Right ventricle myocardium superior (tissue), 1 donor: ENCODE measurements at regions of chr16 and their contacts with region 1.

Region 1: DNA sequence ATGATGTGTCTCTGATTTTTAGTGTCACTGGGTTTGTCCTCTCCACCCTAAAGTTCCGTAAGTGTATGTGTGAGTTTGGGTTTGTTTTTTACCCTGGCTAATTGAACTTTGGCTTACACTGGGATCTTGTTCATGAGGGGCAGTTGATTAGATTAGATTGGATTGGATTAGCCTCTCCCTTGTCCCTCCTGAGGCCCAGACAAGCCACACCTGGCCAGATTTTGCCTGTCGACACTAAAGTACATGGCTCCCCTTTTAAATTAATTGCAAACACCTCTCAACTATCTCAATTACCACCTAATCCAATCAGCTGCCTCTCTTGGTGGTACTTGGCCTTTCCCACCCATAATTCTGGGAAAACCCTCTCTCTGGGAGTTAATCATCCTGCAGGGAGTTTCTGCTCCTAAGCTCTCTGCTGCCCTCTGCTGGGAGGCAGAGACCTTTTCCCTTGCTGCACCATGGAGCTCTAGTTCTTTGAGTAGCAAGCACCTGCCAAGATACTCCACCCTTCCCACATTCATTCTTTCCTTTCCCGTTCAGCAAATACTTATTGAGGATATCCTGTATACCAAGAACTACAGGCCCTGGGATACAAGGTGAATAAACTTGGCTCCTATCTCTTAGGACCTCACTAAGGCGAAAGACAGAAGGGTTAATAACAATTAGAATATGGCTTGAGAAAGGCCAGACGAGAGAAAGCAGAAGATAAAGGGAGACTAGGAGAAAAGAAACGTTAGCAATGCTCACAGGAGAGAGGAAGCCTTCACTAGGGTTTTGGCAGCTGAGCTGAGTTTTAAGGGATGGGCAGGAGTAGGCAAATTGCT is 60.0 kb upstream of the MPHOSPH6 start:
- DNase-seq: peak; percentile 66
- ATAC-seq: peak; percentile 79

Region 2: GRCh38 chr16:81891736-81892357 is 338.2 kb before region 1 on chr16:
- intact Hi-C with region 1: loop called (anchors 5 kb)
- DNase-seq: no peak
- ATAC-seq: no peak

Region 3: GRCh38 chr16:81908466-81909227 is 321.4 kb before region 1 on chr16:
- intact Hi-C with region 1: no loop called
- DNase-seq: no peak
- ATAC-seq: no peak

Region 4: GRCh38 chr16:81940781-81941560 is 289.0 kb before region 1 on chr16:
- intact Hi-C with region 1: loop called (anchors 2 kb)
- DNase-seq: no peak
- ATAC-seq: no peak

Region 5: GRCh38 chr16:82031116-82032084 is 198.6 kb before region 1 on chr16:
- intact Hi-C with region 1: loop called (anchors 5 kb)
- DNase-seq: no peak
- ATAC-seq: no peak

Region 6: DNA sequence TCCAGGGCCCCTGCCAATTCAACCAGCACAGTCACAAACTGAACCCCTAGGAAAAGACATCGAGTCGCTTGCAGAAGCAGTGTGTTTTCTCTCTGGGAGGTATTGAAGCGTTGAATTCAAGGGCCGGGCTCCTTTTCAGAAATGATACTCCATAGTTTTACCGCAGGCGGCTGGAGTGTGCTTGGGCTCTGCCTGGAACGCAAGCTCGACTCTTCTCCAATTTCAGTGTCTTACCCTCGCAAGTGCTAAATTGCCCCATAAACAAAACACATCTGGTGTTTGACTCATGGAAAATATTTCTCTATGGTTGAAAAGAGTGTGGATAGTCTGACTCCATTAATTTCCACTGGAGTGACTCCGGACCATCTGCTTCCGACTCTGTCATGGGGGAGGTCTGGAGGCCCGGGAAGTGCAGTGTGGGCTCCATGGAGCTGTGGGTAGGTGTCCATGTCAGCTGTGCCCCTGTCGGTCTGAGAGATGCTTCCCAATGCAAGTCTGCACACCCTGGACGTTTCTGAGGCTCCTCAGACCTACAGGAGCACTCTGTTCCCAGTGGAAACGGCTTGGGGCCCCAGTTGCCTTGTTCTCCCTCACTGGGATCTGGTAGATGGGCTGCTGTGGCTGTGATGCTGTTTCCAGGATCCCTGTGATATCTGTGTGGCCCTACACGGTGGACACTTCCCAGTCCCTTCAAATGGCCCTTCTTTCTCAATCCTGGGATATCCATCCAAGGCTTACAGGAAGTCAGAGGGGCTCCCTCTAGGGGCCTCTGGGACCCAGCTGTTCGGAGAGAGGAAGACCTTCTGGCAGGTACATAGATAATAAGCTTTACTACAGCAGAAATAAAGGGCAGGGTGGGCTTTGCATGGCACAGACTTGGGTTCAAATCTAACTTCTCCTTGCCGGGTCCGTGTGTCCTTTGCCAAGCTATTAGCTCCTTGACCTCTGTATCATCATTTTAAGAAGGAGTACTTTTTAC is 277.0 kb after region 1 on chr16:
- intact Hi-C with region 1: no loop called
- DNase-seq: no peak
- ATAC-seq: no peak